Kidney (tissue), 22 donors: ENCODE measurements at regions of chr5 and their contacts with region 1.

Region 1: DNA sequence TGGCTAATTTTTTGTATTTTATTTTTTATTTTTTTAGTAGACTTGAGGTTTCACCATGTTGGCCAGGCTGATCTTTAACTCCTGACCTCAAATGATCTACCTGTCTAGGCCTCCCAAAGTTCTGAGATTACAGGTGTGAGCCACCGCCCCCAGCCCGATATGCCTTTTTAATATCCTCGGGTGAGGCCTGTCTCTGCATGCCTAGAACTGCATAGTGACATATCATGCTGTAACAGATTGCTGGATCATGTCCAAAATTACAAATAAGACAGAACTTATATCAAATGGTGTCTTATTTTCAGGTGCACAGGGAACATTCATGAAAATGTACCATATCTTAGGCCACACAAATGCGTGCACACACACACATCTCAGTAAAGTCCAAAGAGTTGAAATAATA is 39.1 kb upstream of the PJA2 start:
- DNase-seq: no peak
- H3K4me3 ChIP-seq: no peak overlapping the region
- H3K27ac ChIP-seq: no peak overlapping the region
- H3K4me1 ChIP-seq: no peaks in the 10 kb centered on the region
- H3K27me3 ChIP-seq: no peaks in the 10 kb centered on the region
- CTCF ChIP-seq: no peak

Region 2: GRCh38 chr5:108670591-108671289 is 778.1 kb before region 1 on chr5:
- intact Hi-C with region 1: loop called (anchors 10 kb)
- DNase-seq: no peak
- H3K4me3 ChIP-seq: no peak overlapping the region
- H3K27ac ChIP-seq: no peak overlapping the region
- H3K4me1 ChIP-seq: no peaks in the 10 kb centered on the region
- H3K27me3 ChIP-seq: no peaks in the 10 kb centered on the region
- CTCF ChIP-seq: no peak

Region 3: GRCh38 chr5:109242518-109242917 is 206.3 kb before region 1 on chr5:
- intact Hi-C with region 1: no loop called
- DNase-seq: no peak
- H3K4me3 ChIP-seq: no peak overlapping the region
- H3K27ac ChIP-seq: no peak overlapping the region
- H3K4me1 ChIP-seq: no peaks in the 10 kb centered on the region
- H3K27me3 ChIP-seq: no peaks in the 10 kb centered on the region
- CTCF ChIP-seq: no peak

Region 4: DNA sequence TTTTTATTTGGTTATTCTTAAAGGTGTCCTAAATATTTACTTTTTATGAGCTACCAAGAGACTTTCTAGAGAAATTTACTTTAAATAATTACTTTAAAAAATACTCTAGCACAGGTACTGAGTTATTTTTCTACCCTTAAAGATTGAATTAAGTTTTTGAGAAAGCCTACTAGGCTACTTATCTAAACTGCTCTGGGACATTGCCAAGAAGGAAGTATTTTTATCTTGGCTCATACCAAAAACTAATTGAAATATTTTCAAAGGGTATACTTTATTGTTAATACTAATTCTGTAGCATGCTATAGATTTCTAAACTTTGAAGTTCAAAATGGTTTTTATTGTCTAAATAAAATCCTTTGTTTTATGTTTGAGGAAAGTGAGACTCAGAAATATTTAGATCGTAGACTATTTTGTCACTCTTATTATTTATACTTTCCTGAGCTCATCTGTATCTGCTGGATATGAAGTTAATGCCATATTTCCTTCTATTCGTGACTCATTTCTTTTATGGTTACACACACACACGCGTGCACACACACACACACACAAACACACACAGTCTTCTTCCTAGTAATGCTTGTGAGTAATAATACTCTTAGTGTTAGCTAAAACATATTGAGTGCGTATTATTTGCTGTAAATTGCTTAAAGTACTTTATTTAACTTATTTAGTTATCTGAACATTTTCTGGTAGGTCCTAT is 330.3 kb after region 1 on chr5:
- intact Hi-C with region 1: no loop called
- DNase-seq: peak in 1 of 5 donors; percentile 11
- H3K4me3 ChIP-seq: no peak overlapping the region
- H3K27ac ChIP-seq: no peak overlapping the region
- H3K4me1 ChIP-seq: no peaks in the 10 kb centered on the region
- H3K27me3 ChIP-seq: no peaks in the 10 kb centered on the region
- CTCF ChIP-seq: no peak